ENCODE measurements at regions of chr9 and their contacts with region 1.

Region 1: GRCh38 chr9:6902423-6902822 is 144.7 kb downstream of the KDM4C start:
- DNase-seq: no peak
- ATAC-seq: no peak
- H3K4me3 Mint-ChIP-seq: no peak overlapping the region
- H3K27ac Mint-ChIP-seq: 0 out of 2 replicates have a peak overlapping the region, but pooled peaks have one; percentile 9
- H3K4me1 Mint-ChIP-seq: peaks cover 35% of the 10 kb centered on the region
- H3K27me3 Mint-ChIP-seq: no peaks in the 10 kb centered on the region
- CTCF ChIP-seq: no peak

Region 2: GRCh38 chr9:8542537-8542936 is 1640.1 kb after region 1 on chr9:
- CTCF ChIA-PET with region 1: no interaction called
- POLR2A ChIA-PET with region 1: interaction called, 15 read pairs
- DNase-seq: no peak
- ATAC-seq: no peak
- H3K4me3 Mint-ChIP-seq: no peak overlapping the region
- H3K27ac Mint-ChIP-seq: no peak overlapping the region
- H3K4me1 Mint-ChIP-seq: peaks cover 1% of the 10 kb centered on the region
- H3K27me3 Mint-ChIP-seq: no peaks in the 10 kb centered on the region
- CTCF ChIP-seq: no peak

Measured in WTC11 (cell line).